Endothelial cell of umbilical vein (primary cell): ENCODE measurements at regions of chr2 and their contacts with region 1.

Region 1: DNA sequence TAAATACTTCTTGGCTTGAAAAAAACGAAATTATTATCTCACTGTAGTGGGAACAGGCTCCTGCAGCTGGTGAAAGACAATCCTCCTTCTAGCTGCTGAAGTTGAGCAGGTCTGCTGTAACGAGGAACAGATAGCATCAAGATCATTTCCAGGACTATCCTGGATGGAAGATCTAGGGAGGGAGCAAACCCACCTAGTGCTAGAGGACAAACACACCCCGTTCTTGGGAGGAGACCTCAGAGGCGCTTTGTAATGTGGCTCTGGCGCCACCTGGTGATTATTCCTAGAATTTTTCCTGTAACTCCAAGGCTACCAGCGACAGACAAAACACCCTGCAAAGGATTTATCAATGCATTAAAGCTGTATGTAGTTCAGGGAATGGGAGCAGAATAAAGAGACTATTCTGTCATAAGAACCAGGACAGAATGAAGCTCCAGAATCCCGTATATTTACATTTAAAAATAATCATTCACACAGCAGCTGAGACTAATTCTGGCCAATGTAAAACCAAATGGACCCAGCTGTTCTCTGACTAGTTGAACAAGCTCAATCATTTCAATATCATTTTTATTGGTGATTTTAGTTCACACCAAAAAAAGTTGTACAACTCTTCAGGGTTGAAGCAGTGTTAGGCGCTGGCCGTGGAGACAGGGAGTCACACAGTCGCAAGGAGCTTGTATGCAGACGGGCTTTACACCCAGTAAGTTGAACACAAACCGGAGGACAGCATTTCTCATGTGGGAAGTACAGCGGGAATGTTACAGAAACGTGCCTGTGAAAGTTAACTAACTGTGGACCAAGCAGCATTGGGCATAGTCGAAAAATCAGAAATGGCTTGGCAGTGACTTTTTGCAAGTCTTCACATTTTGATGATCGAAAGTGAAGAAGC is 290.3 kb downstream of the TRIB2 start:
- DNase-seq: peak; percentile 83
- H3K4me3 ChIP-seq: no peak overlapping the region
- H3K27ac ChIP-seq: no peak overlapping the region
- H3K4me1 ChIP-seq: peaks cover 19% of the 10 kb centered on the region
- H3K27me3 ChIP-seq: peaks cover 0 to 3% of the 10 kb centered on the region in 2 experiments
- CTCF ChIP-seq: peak; percentile 63 to 71
- POLR2A ChIP-seq: no peak

Region 2: DNA sequence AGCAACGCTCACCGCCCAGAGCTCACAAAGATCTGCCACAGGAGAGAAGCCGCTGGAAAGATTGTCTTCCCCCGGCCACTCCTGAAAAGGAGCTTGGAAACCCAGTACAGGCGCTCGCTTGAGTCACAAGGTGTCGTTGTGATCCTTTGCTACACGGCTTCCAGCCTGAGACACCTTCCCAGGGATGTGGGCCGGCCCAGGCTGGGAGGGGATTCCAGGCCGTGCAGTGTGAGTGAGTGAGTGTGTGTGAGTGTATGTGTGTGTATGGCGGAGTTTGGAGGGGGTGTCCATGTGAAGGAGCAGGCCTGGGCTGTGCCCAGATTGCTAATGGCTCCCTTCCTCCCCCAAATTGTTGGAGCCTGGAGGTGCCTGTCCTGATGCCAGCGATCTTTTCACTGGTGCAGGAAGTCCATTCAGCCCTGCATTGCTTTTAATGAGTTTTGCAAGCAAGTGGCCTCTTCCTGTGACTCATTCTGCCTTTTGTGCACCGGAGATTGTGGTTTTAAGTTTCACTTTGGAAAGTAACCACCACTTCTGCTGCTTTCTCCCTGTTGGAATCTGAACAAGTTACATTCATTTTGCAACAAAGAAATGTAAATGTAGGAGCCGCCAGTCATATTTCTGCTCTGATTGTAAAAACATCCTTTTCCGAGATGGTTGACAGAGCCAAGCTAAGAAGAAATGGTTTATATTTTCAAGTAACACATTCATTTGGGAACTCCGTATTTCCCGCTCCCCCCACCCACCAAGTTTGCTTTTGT is 1176.9 kb before region 1 on chr2:
- CTCF ChIA-PET with region 1: interaction called, 69 read pairs
- POLR2A ChIA-PET with region 1: no interaction called
- dilution Hi-C with region 1: no loop called
- intact Hi-C with region 1: loop called (anchors 1 kb)
- DNase-seq: peak; percentile 96
- H3K4me3 ChIP-seq: peak overlapping the region; percentile 13 to 47 (median 17)
- H3K27ac ChIP-seq: peak overlapping the region; percentile 73
- H3K4me1 ChIP-seq: peaks cover 30% of the 10 kb centered on the region
- H3K27me3 ChIP-seq: no peaks in the 10 kb centered on the region
- CTCF ChIP-seq: peak; percentile 27 to 43
- POLR2A ChIP-seq: no peak

Region 3: DNA sequence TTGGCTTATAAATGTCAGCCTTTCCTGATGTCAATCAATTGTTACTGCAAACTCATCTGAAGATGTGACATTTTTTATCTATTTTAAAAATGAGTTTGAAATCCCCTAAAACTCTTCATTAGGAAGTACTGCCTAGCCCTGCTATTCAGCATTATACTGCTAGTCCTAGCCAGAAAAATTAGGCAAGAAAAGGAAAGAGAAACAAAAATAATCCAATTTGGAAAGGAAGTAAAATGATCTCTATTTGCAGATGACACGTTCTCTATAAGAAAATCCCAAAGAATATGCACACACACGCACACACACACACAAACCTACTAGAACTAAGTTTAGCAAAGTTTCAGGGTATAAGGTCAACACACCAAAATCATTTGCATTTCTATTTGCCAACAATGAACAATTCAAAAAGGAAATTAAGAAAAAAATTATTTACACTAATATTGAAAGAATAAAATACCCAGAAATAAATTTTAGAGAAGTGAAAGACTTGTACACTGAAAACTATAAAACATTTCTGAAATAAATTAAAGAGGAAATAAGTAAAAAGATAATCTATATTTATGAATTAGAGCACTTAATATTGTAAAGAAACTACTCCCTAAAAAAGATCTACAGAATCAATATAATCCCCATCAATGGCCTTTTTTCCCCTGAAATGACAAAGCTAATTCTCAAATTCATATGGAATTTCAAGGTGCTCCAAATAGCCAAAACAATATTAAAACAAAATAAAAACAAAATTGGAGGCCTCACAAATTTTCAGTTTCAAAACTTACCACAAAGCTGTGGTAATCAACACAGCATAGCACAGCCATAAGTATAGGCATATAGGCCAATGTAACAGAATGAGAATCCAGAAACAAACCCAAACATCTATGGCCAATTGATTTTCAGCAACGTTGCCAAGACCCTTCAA is 724.0 kb before region 1 on chr2:
- CTCF ChIA-PET with region 1: interaction called, 3 read pairs
- POLR2A ChIA-PET with region 1: no interaction called
- dilution Hi-C with region 1: no loop called
- intact Hi-C with region 1: loop called (anchors 10 kb)
- DNase-seq: no peak
- H3K4me3 ChIP-seq: no peak overlapping the region
- H3K27ac ChIP-seq: no peak overlapping the region
- H3K4me1 ChIP-seq: peaks cover 15% of the 10 kb centered on the region
- H3K27me3 ChIP-seq: no peaks in the 10 kb centered on the region
- CTCF ChIP-seq: no peak
- POLR2A ChIP-seq: no peak

Region 4: DNA sequence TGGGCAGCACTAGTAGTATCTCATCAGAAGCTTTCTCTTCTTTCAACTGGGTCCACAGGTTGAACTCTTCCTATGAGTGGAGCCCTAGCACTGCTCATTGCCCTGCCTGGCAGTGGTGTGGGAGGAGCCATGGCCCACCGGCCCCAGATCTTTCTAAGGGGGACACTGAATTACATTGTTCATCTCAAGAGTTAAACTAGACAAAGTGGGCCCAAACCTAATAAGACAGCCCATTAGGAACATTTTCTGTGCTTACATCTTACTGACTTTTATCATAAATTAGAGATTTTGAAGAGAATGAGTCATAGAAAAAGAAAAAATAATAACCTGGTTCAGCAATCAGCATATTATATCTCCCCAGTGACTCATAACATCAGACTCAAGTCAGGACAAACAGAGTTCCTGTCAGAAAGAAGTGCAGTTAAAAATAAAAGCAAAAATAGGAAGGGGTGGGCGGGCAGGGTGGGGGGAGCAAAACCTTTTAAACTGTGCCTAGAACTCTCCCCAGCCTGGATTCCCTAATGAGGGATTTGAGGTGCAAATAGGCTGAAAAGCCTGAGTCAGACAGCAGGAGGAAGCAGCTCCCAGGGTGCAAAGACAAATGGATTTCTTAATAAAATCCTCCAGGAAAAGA is 451.9 kb before region 1 on chr2:
- CTCF ChIA-PET with region 1: interaction called, 6 read pairs
- POLR2A ChIA-PET with region 1: no interaction called
- dilution Hi-C with region 1: no loop called
- intact Hi-C with region 1: loop called (anchors 1 kb)
- DNase-seq: peak; percentile 85
- H3K4me3 ChIP-seq: no peak overlapping the region
- H3K27ac ChIP-seq: no peak overlapping the region
- H3K4me1 ChIP-seq: peaks cover 23% of the 10 kb centered on the region
- H3K27me3 ChIP-seq: no peaks in the 10 kb centered on the region
- CTCF ChIP-seq: no peak
- POLR2A ChIP-seq: no peak

Region 5: DNA sequence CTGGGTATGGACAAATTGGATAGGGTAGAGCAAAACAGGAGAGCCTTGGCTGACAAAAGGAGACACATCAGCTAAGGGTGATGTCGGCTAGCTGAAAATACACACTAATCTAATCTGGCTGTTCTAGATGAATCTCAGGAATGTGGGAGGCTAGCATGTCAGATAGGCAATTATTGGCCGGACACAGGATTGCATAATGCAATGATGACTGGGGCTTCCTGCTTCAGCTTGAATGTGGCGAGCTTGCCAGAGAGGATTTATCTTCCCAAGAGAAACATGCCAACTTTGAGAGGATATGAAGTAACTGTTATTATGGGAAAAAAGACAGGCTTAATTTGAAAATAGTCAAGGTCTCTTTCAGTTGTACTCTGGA is 188.0 kb before region 1 on chr2:
- CTCF ChIA-PET with region 1: interaction called, 3 read pairs
- POLR2A ChIA-PET with region 1: no interaction called
- dilution Hi-C with region 1: no loop called
- intact Hi-C with region 1: loop called (anchors 1 kb)
- DNase-seq: peak; percentile 97
- H3K4me3 ChIP-seq: peak overlapping the region in 1 of 3 experiments; percentile 41
- H3K27ac ChIP-seq: peak overlapping the region; percentile 96
- H3K4me1 ChIP-seq: peaks cover 32% of the 10 kb centered on the region
- H3K27me3 ChIP-seq: no peaks in the 10 kb centered on the region
- CTCF ChIP-seq: no peak
- POLR2A ChIP-seq: peak; percentile 52

Region 6: GRCh38 chr2:12948961-12949353 is 58.1 kb before region 1 on chr2:
- CTCF ChIA-PET with region 1: interaction called, 12 read pairs
- POLR2A ChIA-PET with region 1: no interaction called
- dilution Hi-C with region 1: no loop called
- intact Hi-C with region 1: loop called (anchors 1 kb)
- DNase-seq: no peak
- H3K4me3 ChIP-seq: no peak overlapping the region
- H3K27ac ChIP-seq: no peak overlapping the region
- H3K4me1 ChIP-seq: peaks cover 17% of the 10 kb centered on the region
- H3K27me3 ChIP-seq: no peaks in the 10 kb centered on the region
- CTCF ChIP-seq: no peak
- POLR2A ChIP-seq: no peak

Region 7: GRCh38 chr2:12990523-12990922 is 16.6 kb before region 1 on chr2:
- CTCF ChIA-PET with region 1: interaction called, 25 read pairs
- POLR2A ChIA-PET with region 1: no interaction called
- dilution Hi-C with region 1: no loop called
- intact Hi-C with region 1: loop called (anchors 1 kb)
- DNase-seq: peak; percentile 32
- H3K4me3 ChIP-seq: no peak overlapping the region
- H3K27ac ChIP-seq: no peak overlapping the region
- H3K4me1 ChIP-seq: peaks cover 17% of the 10 kb centered on the region
- H3K27me3 ChIP-seq: no peaks in the 10 kb centered on the region
- CTCF ChIP-seq: no peak
- POLR2A ChIP-seq: no peak

Region 8: GRCh38 chr2:13135856-13136255 is 128.8 kb after region 1 on chr2:
- CTCF ChIA-PET with region 1: no interaction called
- POLR2A ChIA-PET with region 1: no interaction called
- dilution Hi-C with region 1: no loop called
- intact Hi-C with region 1: no loop called
- DNase-seq: no peak
- H3K4me3 ChIP-seq: no peak overlapping the region
- H3K27ac ChIP-seq: no peak overlapping the region
- H3K4me1 ChIP-seq: no peaks in the 10 kb centered on the region
- H3K27me3 ChIP-seq: no peaks in the 10 kb centered on the region
- CTCF ChIP-seq: no peak
- POLR2A ChIP-seq: no peak

Region 9: GRCh38 chr2:13543550-13543949 is 536.5 kb after region 1 on chr2:
- CTCF ChIA-PET with region 1: no interaction called
- POLR2A ChIA-PET with region 1: no interaction called
- dilution Hi-C with region 1: no loop called
- intact Hi-C with region 1: no loop called
- DNase-seq: no peak
- H3K4me3 ChIP-seq: no peak overlapping the region
- H3K27ac ChIP-seq: no peak overlapping the region
- H3K4me1 ChIP-seq: no peaks in the 10 kb centered on the region
- H3K27me3 ChIP-seq: no peaks in the 10 kb centered on the region
- CTCF ChIP-seq: no peak
- POLR2A ChIP-seq: no peak